ENCODE measurements at regions of chr3 and their contacts with region 1.

Region 1: GRCh38 chr3:124492811-124493210 is 237.4 kb upstream of the UMPS start:
- DNase-seq: peak; percentile 68 to 74 (median 73)
- ATAC-seq: peak; percentile 88
- H3K4me3 ChIP-seq: no peak overlapping the region
- H3K27ac ChIP-seq: no peak overlapping the region
- H3K4me1 ChIP-seq: no peaks in the 10 kb centered on the region
- H3K27me3 ChIP-seq: no peaks in the 10 kb centered on the region
- CTCF ChIP-seq: peak; percentile 29 to 73 (median 56)
- POLR2A ChIP-seq: no peak

Region 2: GRCh38 chr3:124383083-124383482 is 109.7 kb before region 1 on chr3:
- intact Hi-C with region 1: no loop called
- DNase-seq: no peak
- ATAC-seq: no peak
- H3K4me3 ChIP-seq: no peak overlapping the region
- H3K27ac ChIP-seq: no peak overlapping the region
- H3K4me1 ChIP-seq: no peaks in the 10 kb centered on the region
- H3K27me3 ChIP-seq: no peaks in the 10 kb centered on the region
- CTCF ChIP-seq: no peak
- POLR2A ChIP-seq: no peak

Region 3: GRCh38 chr3:124545891-124546290 is 53.1 kb after region 1 on chr3:
- intact Hi-C with region 1: loop called (anchors 5 kb)
- DNase-seq: no peak
- ATAC-seq: no peak
- H3K4me3 ChIP-seq: no peak overlapping the region
- H3K27ac ChIP-seq: no peak overlapping the region
- H3K4me1 ChIP-seq: peaks cover 6% of the 10 kb centered on the region
- H3K27me3 ChIP-seq: no peaks in the 10 kb centered on the region
- CTCF ChIP-seq: no peak
- POLR2A ChIP-seq: no peak